ENCODE measurements at regions of chr2 and their contacts with region 1.

Region 1: DNA sequence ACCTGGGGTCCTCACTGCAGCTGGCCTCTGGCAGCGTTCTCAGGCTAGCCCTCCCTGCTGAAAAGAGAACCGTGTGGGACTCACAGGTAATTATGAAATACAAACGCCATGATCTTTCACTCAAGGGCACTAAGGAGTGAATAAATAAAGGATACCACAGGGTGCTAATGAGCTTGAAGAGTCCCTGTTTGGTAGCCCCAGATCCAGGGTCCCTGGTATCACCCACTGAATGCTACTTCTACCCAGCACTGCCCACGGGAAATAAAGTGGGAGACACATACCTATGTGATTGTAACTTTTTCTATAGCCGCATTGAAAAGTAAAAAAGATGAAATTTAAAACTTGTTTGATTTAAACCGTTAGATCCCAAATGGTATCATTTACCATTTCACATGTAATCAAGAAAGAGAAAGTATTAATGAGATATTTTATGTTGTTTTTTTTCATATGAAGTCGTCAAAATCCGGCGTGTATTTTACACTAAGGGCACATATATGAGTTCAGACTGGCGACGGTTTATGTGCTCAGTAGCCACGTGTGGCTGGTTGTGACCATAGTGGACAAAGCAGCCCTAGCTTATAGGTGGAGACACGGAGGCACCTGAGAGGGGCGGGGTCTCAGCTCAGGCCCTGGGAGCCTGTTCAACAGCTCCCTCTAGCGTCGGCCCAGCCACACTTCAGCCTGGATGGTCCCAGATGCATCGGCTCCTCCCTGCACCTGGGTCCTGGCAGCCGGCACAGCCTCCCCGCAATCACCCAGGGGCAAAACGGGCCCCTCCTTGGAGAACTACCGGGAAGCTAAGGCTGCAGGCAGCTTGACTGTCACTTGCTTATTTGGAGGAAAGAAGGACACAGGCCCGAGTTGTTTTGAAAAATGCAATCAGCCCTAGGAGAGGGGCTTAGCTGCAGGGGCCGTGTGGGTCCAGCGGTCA is 39.2 kb downstream of the ODC1 start:
- DNase-seq: peak; percentile 86 to 88
- H3K4me3 ChIP-seq: peak overlapping the region; percentile 31; the same call in 1 of the 2 replicates
- H3K27ac ChIP-seq: peak overlapping the region; percentile 97
- H3K4me1 ChIP-seq: peaks cover 66% of the 10 kb centered on the region
- H3K27me3 ChIP-seq: no peaks in the 10 kb centered on the region
- CTCF ChIP-seq: peak; percentile 98

Region 2: DNA sequence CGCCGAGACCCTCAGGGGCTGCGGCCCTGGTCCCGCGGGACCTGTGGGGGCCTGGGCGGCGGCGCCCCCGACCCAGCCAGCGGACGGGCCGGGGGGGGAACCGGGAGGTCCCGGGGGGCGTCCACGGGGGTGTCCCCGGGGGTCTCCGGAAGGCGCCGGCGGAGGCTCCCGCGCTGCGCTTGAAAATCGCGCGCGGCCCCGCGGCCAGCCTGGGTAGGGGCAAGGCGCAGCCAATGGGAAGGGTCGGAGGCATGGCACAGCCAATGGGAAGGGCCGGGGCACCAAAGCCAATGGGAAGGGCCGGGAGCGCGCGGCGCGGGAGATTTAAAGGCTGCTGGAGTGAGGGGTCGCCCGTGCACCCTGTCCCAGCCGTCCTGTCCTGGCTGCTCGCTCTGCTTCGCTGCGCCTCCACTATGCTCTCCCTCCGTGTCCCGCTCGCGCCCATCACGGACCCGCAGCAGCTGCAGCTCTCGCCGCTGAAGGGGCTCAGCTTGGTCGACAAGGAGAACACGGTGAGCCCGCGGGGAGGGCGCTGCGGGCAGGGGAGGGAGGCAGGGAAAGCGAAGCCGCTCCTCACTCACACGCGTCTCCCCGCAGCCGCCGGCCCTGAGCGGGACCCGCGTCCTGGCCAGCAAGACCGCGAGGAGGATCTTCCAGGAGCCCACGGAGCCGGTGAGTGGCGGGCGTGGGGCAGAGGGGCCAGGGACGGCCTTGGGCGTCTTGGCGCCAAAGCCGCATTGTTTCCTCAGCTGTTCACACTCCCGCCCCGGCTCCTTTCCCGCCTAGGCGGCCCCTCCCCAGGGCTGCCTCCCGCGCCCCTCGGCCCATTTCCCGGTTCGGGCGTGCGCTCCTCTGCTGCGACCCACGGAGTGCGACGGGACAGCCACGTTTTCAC is 286.3 kb before region 1 on chr2 and contains the start of gene RRM2:
- CTCF ChIA-PET with region 1: interaction called, 22 read pairs
- POLR2A ChIA-PET with region 1: interaction called, 10 read pairs
- intact Hi-C with region 1: loop called (anchors 1 kb)
- DNase-seq: peak; percentile 83 to 92
- H3K4me3 ChIP-seq: peak within 1 kb of the TSS; percentile 88
- H3K27ac ChIP-seq: peak within 1 kb of the TSS; percentile 93
- H3K4me1 ChIP-seq: peaks cover 34% of the 10 kb centered on the region
- H3K27me3 ChIP-seq: no peaks in the 10 kb centered on the region
- CTCF ChIP-seq: no peak
- total RNA-seq, gene RRM2: 90.4 and 105 TPM in 2 replicates

Region 3: GRCh38 chr2:10220902-10221391 is 188.0 kb before region 1 on chr2:
- CTCF ChIA-PET with region 1: no interaction called
- POLR2A ChIA-PET with region 1: no interaction called
- intact Hi-C with region 1: loop called (anchors 2 kb)
- DNase-seq: peak; percentile 21 to 72
- H3K4me3 ChIP-seq: 0 out of 2 replicates have a peak overlapping the region, but pooled peaks have one; percentile 21
- H3K27ac ChIP-seq: peak overlapping the region; percentile 52
- H3K4me1 ChIP-seq: peaks cover 19% of the 10 kb centered on the region; the same call in 1 of the 2 replicates
- H3K27me3 ChIP-seq: no peaks in the 10 kb centered on the region
- CTCF ChIP-seq: no peak

Region 4: DNA sequence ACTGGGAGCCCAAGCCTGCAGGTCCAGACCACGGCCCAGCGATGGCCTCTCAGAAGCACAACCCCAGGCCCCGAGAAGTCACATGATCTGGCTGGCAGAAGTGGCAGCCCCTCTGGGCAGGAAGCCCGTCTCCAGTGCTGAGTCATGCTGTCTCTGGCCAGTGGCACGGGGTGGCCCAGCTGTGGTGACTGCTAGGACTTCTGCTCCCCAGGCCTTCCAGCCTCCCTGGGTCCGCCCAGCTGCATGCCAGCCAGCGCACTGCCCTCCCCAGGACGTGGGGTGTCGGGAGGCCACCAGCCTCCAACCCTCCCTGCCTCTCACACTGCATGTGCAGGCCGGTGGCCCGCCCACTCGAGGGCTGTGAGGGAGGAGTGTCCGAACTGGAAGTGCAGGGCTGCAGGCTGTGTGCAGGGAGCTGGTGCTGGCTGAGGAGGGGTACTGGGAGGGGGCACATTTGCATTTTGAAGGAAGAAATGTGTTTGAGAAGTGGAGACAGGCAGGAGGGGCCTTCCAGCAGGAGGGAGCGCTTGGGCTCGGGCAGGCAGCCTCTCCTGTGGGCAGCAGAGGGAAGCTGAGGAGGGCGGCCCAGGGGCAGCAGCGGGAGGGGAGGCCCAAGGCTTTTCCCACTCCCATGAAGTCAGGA is 123.2 kb before region 1 on chr2:
- CTCF ChIA-PET with region 1: interaction called, 5 read pairs
- POLR2A ChIA-PET with region 1: interaction called, 6 read pairs
- intact Hi-C with region 1: loop called (anchors 1 kb)
- DNase-seq: peak; percentile 93 to 94
- H3K4me3 ChIP-seq: no peak overlapping the region; the same call in 1 of the 2 replicates
- H3K27ac ChIP-seq: peak overlapping the region; percentile 99
- H3K4me1 ChIP-seq: peaks cover 92% of the 10 kb centered on the region
- H3K27me3 ChIP-seq: no peaks in the 10 kb centered on the region
- CTCF ChIP-seq: no peak

Region 5: DNA sequence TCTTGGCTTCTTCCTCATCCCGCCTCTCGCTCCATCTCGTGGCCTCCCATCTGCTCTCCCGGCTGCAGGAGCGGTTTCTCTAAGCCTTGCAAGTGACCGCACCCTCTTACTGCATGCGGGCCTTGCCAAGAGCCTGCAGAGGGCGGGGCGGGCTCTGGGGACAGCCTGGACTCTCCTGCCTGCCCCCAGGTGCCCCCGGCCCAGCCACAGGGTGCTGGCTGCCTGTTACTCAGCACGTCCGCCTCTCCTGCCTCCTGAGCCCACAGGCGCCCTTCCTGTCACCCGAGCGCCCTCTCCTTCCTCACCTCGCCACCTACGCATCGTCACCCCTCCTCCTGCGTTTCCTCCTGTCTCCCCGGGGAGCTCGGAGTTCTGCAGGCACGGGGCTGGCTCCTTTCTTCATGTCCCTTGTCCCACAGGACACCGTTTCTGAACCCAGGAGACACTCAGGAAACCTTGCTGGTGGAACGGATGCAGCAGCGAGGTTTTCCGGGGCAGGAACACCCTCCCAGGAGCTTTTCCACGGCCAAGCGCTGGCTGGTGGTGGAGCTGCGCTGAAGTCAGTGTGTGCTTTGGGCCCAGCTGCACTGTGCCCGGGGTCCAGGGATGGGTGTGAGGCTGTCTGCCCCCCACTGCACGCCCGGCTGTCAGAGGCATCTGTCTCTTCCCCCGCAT is 77.8 kb before region 1 on chr2:
- CTCF ChIA-PET with region 1: interaction called, 4 read pairs
- POLR2A ChIA-PET with region 1: no interaction called
- intact Hi-C with region 1: loop called (anchors 1 kb)
- DNase-seq: peak in 1 of 2 experiments; percentile 93
- H3K4me3 ChIP-seq: no peak overlapping the region
- H3K27ac ChIP-seq: no peak overlapping the region
- H3K4me1 ChIP-seq: peaks cover 17% of the 10 kb centered on the region
- H3K27me3 ChIP-seq: no peaks in the 10 kb centered on the region
- CTCF ChIP-seq: no peak

Region 6: GRCh38 chr2:10366601-10367270 is 42.2 kb before region 1 on chr2:
- CTCF ChIA-PET with region 1: interaction called, 10 read pairs
- POLR2A ChIA-PET with region 1: no interaction called
- intact Hi-C with region 1: no loop called
- DNase-seq: no peak
- H3K4me3 ChIP-seq: no peak overlapping the region
- H3K27ac ChIP-seq: no peak overlapping the region
- H3K4me1 ChIP-seq: no peaks in the 10 kb centered on the region
- H3K27me3 ChIP-seq: no peaks in the 10 kb centered on the region
- CTCF ChIP-seq: no peak

Region 7: GRCh38 chr2:10434886-10435819 is 26.2 kb after region 1 on chr2:
- CTCF ChIA-PET with region 1: interaction called, 12 read pairs
- POLR2A ChIA-PET with region 1: no interaction called
- intact Hi-C with region 1: no loop called
- DNase-seq: peak; percentile 62 to 84
- H3K4me3 ChIP-seq: no peak overlapping the region
- H3K27ac ChIP-seq: no peak overlapping the region
- H3K4me1 ChIP-seq: no peaks in the 10 kb centered on the region; the same call in 1 of the 2 replicates
- H3K27me3 ChIP-seq: no peaks in the 10 kb centered on the region
- CTCF ChIP-seq: peak; percentile 97

Measured in PC-9 (cell line).